ENCODE measurements at regions of chr12 and their contacts with region 1.

Region 1: GRCh38 chr12:51307655-51308593 is 16.1 kb downstream of the BIN2 start:
- DNase-seq: no peak
- H3K4me3 ChIP-seq: no peak overlapping the region
- H3K4me3 Mint-ChIP-seq: peak overlapping the region in 5 of 8 donors; percentile 12 to 70 (median 27)
- H3K27ac ChIP-seq: no peak overlapping the region
- H3K27ac Mint-ChIP-seq: peak overlapping the region; percentile 60 to 92 (median 84)
- H3K4me1 ChIP-seq: peaks cover 56% of the 10 kb centered on the region
- H3K4me1 Mint-ChIP-seq: peaks cover 44 to 79% (median 60%) of the 10 kb centered on the region in 4 donors
- H3K27me3 ChIP-seq: no peaks in the 10 kb centered on the region
- H3K27me3 Mint-ChIP-seq: no peaks in the 10 kb centered on the region

Region 2: DNA sequence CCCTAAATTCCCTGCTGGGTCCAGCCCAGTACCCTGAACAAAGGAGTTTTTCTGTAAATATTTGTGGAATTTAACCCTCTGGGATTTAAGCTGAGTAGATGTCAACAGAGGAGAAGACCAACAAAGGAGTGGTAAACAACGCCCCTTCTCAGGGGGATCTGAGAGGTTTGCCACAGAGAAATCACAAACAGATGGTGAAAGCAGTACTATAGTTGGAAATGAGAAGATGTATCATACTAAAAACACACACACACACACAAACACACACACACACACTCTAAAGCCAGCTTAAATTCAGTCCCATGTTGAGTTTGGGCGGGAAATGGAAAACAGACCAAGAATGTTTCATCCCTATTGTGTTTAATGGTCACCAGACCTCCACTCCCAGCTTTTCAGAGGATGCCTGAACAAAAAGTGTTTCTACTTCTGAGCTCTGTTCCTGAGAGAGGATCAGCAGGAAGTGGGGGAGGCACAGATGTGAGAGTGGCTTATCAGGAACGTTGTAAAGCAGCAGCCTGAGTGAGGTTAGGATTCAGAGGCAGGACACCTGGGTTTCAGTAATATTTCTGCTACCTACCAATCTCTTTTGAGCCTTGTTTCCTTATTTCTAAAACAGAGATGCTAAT is 12.9 kb after region 1 on chr12:
- CTCF ChIA-PET with region 1: interaction called, 10 read pairs
- POLR2A ChIA-PET with region 1: interaction called, 85 read pairs
- intact Hi-C with region 1: no loop called
- DNase-seq: peak in 1 of 5 donors; percentile 29
- H3K4me3 ChIP-seq: peak overlapping the region; percentile 61 to 73
- H3K4me3 Mint-ChIP-seq: peak overlapping the region; percentile 82 to 99 (median 96)
- H3K27ac ChIP-seq: peak overlapping the region; percentile 94
- H3K27ac Mint-ChIP-seq: peak overlapping the region; percentile 95 to 98 (median 98)
- H3K4me1 ChIP-seq: peaks cover 78% of the 10 kb centered on the region
- H3K4me1 Mint-ChIP-seq: peaks cover 53 to 93% (median 72%) of the 10 kb centered on the region in 4 donors
- H3K27me3 ChIP-seq: no peaks in the 10 kb centered on the region
- H3K27me3 Mint-ChIP-seq: no peaks in the 10 kb centered on the region

Region 3: DNA sequence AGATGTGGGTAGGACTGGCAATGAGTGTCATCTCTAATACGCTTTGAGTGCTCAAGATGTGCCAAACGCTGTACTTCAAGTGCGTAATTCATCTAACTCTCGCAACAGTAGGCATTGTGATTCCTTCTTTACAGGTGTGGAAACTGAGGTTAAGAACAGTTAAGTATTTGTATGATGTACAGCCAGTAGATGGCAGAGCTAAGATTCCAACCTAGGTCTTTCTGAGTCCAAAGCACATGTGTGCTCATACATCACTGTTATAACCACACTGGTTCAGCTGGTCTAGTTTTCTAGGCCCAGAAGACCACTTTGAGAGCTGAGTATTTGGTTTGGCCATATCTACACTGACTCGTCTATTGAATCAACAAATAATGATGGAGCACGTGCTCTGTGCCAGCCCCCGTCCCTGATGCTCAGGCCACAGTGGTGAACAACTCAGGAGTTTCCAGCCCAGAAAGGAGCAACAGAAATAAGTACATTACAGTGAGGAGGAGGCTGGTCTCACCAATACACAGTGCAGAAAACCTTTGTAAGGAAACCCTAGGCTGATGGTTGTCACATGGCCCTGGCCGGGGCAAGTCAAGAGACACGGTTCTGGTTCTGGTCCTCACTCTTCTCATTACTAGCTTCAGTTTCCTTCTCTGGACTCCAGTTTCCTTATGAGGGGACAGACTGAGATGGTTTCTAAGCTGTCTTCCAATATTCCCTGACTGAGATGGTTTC is 213.8 kb after region 1 on chr12:
- CTCF ChIA-PET with region 1: no interaction called
- POLR2A ChIA-PET with region 1: no interaction called
- intact Hi-C with region 1: no loop called
- DNase-seq: no peak
- H3K4me3 ChIP-seq: no peak overlapping the region
- H3K4me3 Mint-ChIP-seq: no peak overlapping the region
- H3K27ac ChIP-seq: no peak overlapping the region
- H3K27ac Mint-ChIP-seq: no peak overlapping the region
- H3K4me1 ChIP-seq: no peaks in the 10 kb centered on the region
- H3K4me1 Mint-ChIP-seq: no peaks in the 10 kb centered on the region
- H3K27me3 ChIP-seq: no peaks in the 10 kb centered on the region
- H3K27me3 Mint-ChIP-seq: peaks cover 0 to 2% of the 10 kb centered on the region in 2 donors

Region 4: DNA sequence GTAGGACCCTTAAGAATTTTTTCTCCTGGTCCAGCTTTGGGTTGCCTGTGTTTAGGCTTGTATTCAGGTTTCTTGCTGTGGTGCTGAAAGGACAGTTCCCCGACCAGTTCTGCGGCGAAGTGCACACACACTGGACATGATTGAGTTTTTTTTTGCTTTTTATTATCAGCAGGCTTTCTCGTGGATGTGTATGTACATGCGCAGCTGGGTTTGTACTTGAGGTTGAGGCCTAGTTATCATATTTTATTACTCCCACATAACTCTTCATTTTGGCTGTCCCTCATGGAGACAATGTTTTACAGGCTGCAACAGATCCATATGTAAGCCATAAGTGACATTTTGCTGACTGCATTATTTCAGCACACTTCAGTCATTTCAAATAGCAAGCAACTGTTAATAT is 285.6 kb after region 1 on chr12:
- CTCF ChIA-PET with region 1: no interaction called
- POLR2A ChIA-PET with region 1: no interaction called
- intact Hi-C with region 1: no loop called
- DNase-seq: peak in 4 of 5 donors; percentile 14 to 30 (median 18)
- H3K4me3 ChIP-seq: no peak overlapping the region
- H3K4me3 Mint-ChIP-seq: peak overlapping the region in 2 of 8 donors; percentile 9 to 24
- H3K27ac ChIP-seq: no peak overlapping the region
- H3K27ac Mint-ChIP-seq: no peak overlapping the region
- H3K4me1 ChIP-seq: peaks cover 14% of the 10 kb centered on the region
- H3K4me1 Mint-ChIP-seq: peaks cover 5 to 27% (median 14%) of the 10 kb centered on the region in 4 donors
- H3K27me3 ChIP-seq: peaks cover 13% of the 10 kb centered on the region
- H3K27me3 Mint-ChIP-seq: peaks cover 37 to 43% of the 10 kb centered on the region in 2 donors